ENCODE measurements at regions of chr15 and their contacts with region 1.

Region 1: GRCh38 chr15:55407949-55408791 is at the starts of genes CCPG1 and PIERCE2:
- DNase-seq: peak; percentile 75 to 96 (median 91)

Region 2: DNA sequence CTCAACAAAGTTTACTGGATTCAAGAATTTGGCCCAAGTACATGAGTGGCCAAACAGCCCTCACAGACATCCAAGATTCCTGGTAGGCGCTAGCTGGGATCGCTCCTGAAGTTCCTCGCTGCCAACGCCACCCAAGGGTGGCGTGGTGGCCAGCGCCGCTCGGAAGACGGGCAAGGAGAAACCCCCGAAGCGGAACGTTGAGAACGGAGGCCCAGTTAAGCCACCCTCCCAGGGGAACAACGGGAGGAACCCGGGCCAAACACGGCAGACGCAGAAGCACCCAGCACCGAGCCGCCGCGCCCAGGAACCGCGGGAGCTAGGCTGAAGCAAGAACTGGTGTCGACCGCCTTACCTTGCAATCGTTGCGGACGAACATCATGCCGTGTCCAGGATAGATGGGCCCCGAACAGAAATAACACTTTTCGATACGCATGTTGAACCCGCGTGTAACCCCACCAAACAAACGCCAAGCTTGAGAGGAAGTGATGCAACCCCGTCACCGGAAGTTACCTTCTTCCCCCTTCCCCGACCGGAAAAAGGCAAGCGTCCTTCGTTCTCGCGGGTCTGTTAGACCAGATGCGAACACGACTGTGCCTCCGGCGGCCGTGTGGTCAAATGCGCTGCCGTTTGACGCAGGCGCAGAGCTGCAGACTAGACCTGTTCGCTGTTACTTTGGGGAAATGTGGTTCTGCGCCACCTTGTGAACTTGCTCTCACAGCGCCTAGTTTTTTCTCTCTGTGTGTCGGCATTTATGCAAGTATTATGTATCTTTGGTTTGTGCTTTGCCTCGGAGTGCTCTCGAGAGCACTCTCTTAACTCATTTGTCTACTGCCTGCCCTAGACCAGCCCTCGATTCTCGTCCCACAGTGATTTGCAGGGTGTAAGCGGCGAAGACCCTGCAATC is 211.5 kb before region 1 on chr15 and contains the start of gene RSL24D1:
- intact Hi-C with region 1: loop called (anchors 5 kb)
- DNase-seq: peak; percentile 94 to 99 (median 97)